CD4-positive, alpha-beta memory T cell (primary cell): ENCODE measurements at regions of chr11 and their contacts with region 1.

Region 1: GRCh38 chr11:32343325-32344008 is 91.9 kb downstream of the WT1 start:
- DNase-seq: peak in 4 of 5 donors; percentile 12 to 25 (median 21)
- H3K4me3 ChIP-seq: no peak overlapping the region
- H3K4me3 Mint-ChIP-seq: peak overlapping the region in 1 of 8 donors; percentile 31
- H3K27ac ChIP-seq: no peak overlapping the region
- H3K27ac Mint-ChIP-seq: peak overlapping the region in 1 of 7 donors; percentile 24
- H3K4me1 ChIP-seq: peaks cover 9% of the 10 kb centered on the region
- H3K4me1 Mint-ChIP-seq: peaks cover 10 to 11% (median 10%) of the 10 kb centered on the region in 4 donors
- H3K27me3 ChIP-seq: no peaks in the 10 kb centered on the region
- H3K27me3 Mint-ChIP-seq: peaks cover 0 to 5% of the 10 kb centered on the region in 2 donors

Region 2: GRCh38 chr11:32333320-32333991 is 10.0 kb before region 1 on chr11:
- CTCF ChIA-PET with region 1: interaction called, 12 read pairs
- POLR2A ChIA-PET with region 1: no interaction called
- intact Hi-C with region 1: no loop called
- DNase-seq: peak in 2 of 5 donors; percentile 6 to 11
- H3K4me3 ChIP-seq: peak overlapping the region in 1 of 2 donors; percentile 44
- H3K4me3 Mint-ChIP-seq: peak overlapping the region; percentile 76 to 88 (median 81)
- H3K27ac ChIP-seq: no peak overlapping the region
- H3K27ac Mint-ChIP-seq: peak overlapping the region in 1 of 7 donors; percentile 49
- H3K4me1 ChIP-seq: no peaks in the 10 kb centered on the region
- H3K4me1 Mint-ChIP-seq: peaks cover 7 to 16% (median 12%) of the 10 kb centered on the region in 4 donors
- H3K27me3 ChIP-seq: no peaks in the 10 kb centered on the region
- H3K27me3 Mint-ChIP-seq: peaks cover 16 to 22% of the 10 kb centered on the region in 2 donors

Region 3: GRCh38 chr11:32374261-32374711 is 30.8 kb after region 1 on chr11:
- CTCF ChIA-PET with region 1: no interaction called
- POLR2A ChIA-PET with region 1: no interaction called
- intact Hi-C with region 1: no loop called
- DNase-seq: peak in 2 of 5 donors; percentile 0 to 4
- H3K4me3 ChIP-seq: no peak overlapping the region
- H3K4me3 Mint-ChIP-seq: no peak overlapping the region
- H3K27ac ChIP-seq: no peak overlapping the region
- H3K27ac Mint-ChIP-seq: no peak overlapping the region
- H3K4me1 ChIP-seq: no peaks in the 10 kb centered on the region
- H3K4me1 Mint-ChIP-seq: no peaks in the 10 kb centered on the region
- H3K27me3 ChIP-seq: no peaks in the 10 kb centered on the region
- H3K27me3 Mint-ChIP-seq: peaks cover 4 to 10% of the 10 kb centered on the region in 2 donors

Region 4: DNA sequence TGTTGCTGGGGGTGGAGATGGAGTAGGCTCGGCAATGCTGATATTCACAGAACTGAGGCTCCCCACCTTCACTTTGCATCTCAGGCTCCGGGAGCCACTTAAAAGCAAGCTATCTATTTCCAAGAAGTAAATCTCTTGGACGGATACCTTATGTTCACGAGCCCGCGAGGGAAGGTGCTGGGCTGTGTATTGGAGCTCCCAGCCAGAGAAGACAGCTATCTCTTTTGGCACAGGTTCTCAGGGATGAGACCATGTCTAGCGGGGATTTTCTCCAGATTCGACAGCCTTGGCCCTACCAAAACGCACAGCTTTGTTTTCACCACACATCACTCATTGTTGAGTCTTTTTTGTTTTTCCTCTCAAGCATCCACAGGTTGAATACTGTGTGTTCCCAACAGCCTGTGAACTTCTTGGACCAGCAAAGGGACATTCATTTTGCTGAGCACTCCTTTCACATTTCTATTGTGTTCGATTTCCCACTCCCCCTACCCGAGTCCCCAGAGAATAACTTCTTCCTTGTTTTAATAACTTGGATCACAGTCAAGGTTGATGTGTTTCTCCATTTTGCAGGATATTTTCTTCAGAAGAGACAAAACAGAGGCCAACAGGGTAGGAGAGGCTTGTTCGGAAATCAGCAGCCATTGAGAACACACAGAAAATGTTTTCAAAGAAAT is 68.6 kb after region 1 on chr11:
- CTCF ChIA-PET with region 1: no interaction called
- POLR2A ChIA-PET with region 1: no interaction called
- intact Hi-C with region 1: no loop called
- DNase-seq: no peak
- H3K4me3 ChIP-seq: no peak overlapping the region
- H3K4me3 Mint-ChIP-seq: peak overlapping the region in 1 of 8 donors; percentile 66
- H3K27ac ChIP-seq: no peak overlapping the region
- H3K27ac Mint-ChIP-seq: no peak overlapping the region
- H3K4me1 ChIP-seq: no peaks in the 10 kb centered on the region
- H3K4me1 Mint-ChIP-seq: no peaks in the 10 kb centered on the region
- H3K27me3 ChIP-seq: no peaks in the 10 kb centered on the region
- H3K27me3 Mint-ChIP-seq: peaks cover 10 to 22% of the 10 kb centered on the region in 2 donors

Region 5: DNA sequence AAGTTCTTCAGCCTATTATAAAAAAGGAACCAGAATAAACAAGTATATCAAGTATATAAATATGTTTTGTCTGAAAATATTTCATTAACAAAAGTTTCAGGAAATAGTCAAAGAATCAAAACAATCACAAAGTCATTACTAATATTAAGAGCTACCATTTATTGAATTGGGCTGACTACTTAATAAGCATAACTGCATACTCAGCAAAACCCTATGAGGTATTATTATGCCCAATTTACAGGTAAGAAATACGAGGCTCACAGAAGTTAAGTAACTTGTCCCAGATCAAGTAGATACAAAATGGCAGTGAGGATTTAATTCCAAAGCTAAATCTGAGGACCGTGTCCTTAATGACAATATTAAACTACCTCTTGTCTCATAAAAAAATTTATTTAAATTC is 292.4 kb after region 1 on chr11:
- CTCF ChIA-PET with region 1: no interaction called
- POLR2A ChIA-PET with region 1: no interaction called
- intact Hi-C with region 1: no loop called
- DNase-seq: no peak
- H3K4me3 ChIP-seq: no peak overlapping the region
- H3K4me3 Mint-ChIP-seq: no peak overlapping the region
- H3K27ac ChIP-seq: no peak overlapping the region
- H3K27ac Mint-ChIP-seq: no peak overlapping the region
- H3K4me1 ChIP-seq: no peaks in the 10 kb centered on the region
- H3K4me1 Mint-ChIP-seq: no peaks in the 10 kb centered on the region
- H3K27me3 ChIP-seq: peaks cover 3% of the 10 kb centered on the region
- H3K27me3 Mint-ChIP-seq: peaks cover 9 to 17% of the 10 kb centered on the region in 2 donors